Dendritic cell treated with granulocyte-macrophage colony-stimulating factor and Interleukin-4, amounts not matched to agents 40 ng/mL and 50 ng/mL, for 4 days (primary cell): ENCODE measurements at regions of chr6 and their contacts with region 1.

Region 1: DNA sequence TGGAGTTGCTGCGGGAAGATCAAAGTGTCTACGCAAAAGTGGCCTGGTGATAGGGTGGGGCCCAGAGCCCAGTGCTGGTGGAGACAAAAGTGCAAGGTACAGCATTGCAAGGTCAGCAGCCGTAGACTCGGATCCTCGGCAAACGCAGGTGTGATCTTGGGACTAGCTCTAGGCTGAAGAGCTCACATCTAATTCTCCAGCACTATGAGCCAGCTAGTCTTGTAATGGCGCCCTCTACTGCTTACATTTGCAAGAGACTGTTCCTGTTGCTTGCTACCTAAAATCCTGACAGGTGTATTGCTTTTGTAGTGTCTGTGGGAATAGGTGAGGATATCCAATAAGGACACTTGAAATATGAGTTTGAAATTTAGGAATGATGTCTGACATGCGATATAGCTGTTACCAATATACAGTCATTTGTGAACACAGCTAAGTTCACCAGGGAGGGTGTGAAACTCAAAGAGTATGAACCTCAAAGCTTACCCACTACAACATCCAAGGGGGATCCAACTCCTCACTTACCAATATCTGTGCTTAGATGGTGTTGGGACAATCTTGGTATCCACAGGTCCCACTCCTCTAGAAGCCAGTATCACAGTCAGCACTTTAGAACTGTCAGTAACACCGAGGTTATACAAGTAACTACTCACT is 58.4 kb downstream of the PDE7B start:
- H3K4me3 Mint-ChIP-seq: no peak overlapping the region
- H3K27ac Mint-ChIP-seq: no peak overlapping the region
- H3K4me1 Mint-ChIP-seq: no peaks in the 10 kb centered on the region
- H3K27me3 Mint-ChIP-seq: peaks cover 2% of the 10 kb centered on the region

Region 2: DNA sequence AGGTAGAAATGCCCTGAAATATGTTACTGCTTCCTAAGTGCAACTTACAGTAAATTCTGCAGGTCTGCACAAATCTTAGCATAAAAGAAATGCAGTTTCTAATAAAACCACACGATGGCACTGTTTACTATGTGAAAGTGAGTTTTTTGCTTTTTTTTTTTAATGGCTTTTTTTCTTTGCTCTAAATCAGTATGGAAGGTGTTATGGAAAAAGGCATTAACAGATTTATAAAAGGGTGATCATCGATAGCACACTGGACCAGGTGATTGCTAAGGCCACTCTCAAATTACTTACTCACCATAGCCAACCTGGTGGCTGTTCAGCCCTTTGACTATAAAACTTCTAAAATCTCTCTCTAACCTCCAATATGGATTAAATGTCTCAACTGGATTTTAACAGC is 458.2 kb before region 1 on chr6:
- intact Hi-C with region 1: loop called (anchors 2 kb)
- H3K4me3 Mint-ChIP-seq: no peak overlapping the region
- H3K27ac Mint-ChIP-seq: no peak overlapping the region
- H3K4me1 Mint-ChIP-seq: no peaks in the 10 kb centered on the region
- H3K27me3 Mint-ChIP-seq: no peaks in the 10 kb centered on the region

Region 3: GRCh38 chr6:135535989-135536414 is 373.9 kb before region 1 on chr6:
- intact Hi-C with region 1: loop called (anchors 5 kb)
- H3K4me3 Mint-ChIP-seq: no peak overlapping the region
- H3K27ac Mint-ChIP-seq: no peak overlapping the region
- H3K4me1 Mint-ChIP-seq: no peaks in the 10 kb centered on the region
- H3K27me3 Mint-ChIP-seq: no peaks in the 10 kb centered on the region

Region 4: DNA sequence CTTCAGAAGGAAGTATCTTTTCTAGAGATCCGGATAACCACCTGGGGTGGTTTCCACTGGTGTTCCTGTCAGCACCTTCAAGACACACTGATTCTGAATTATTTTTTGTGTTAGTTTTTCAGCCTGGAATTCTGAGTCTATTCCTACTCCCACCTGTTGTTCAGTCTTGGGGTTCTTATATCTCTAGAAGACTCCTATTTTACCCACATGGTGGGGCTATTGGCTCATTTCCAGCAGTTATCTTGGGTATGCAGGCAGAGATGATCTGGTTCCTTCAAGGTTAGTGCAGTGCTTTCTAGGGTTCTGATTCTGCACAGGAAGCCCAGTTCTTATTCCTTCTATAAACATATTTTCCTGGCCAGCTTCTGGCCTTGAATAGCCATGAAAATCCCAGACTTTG is 234.0 kb before region 1 on chr6:
- intact Hi-C with region 1: loop called (anchors 1 kb)
- H3K4me3 Mint-ChIP-seq: no peak overlapping the region
- H3K27ac Mint-ChIP-seq: no peak overlapping the region
- H3K4me1 Mint-ChIP-seq: no peaks in the 10 kb centered on the region
- H3K27me3 Mint-ChIP-seq: no peaks in the 10 kb centered on the region